ENCODE measurements at regions of chr6 and their contacts with region 1.

Region 1: GRCh38 chr6:75759207-75759606 is 10.2 kb downstream of the MYO6 start:
- DNase-seq: no peak
- ATAC-seq: peak; percentile 65
- H3K4me3 ChIP-seq: no peak overlapping the region
- H3K27ac ChIP-seq: no peak overlapping the region
- H3K4me1 ChIP-seq: no peaks in the 10 kb centered on the region
- H3K27me3 ChIP-seq: no peaks in the 10 kb centered on the region
- CTCF ChIP-seq: no peak
- EP300 ChIP-seq: no peak
- POLR2A ChIP-seq: no peak
- RAD21 ChIP-seq: no peak

Region 2: DNA sequence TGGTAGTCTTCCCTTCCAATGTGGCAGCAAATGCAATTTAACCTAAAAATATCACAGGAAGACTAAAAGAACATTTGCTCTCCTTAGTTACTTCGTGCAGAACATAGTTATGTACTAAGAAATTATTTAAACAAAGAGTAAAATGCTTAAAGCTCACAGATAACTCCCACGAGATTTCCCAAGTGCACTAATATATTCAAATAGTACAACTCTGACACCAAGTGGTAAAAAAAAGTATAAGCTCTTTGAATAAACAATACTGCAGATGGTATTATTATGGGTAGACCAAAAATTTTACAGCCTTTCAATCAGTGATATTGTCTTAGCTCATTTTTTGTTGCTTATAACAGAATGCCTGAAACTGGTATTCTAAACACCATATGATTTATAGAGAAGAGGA is 212.8 kb before region 1 on chr6:
- CTCF ChIA-PET with region 1: no interaction called
- POLR2A ChIA-PET with region 1: no interaction called
- RAD21 ChIA-PET with region 1: no interaction called
- SMC1A ChIA-PET with region 1: no interaction called
- in situ Hi-C with region 1: no loop called
- intact Hi-C with region 1: no loop called
- DNase-seq: no peak
- ATAC-seq: peak; percentile 57
- H3K4me3 ChIP-seq: no peak overlapping the region
- H3K27ac ChIP-seq: no peak overlapping the region
- H3K4me1 ChIP-seq: peaks cover 2% of the 10 kb centered on the region; the same call in 1 of the 2 replicates
- H3K27me3 ChIP-seq: no peaks in the 10 kb centered on the region
- CTCF ChIP-seq: no peak; a peak in 1 of 6 replicates
- EP300 ChIP-seq: no peak
- POLR2A ChIP-seq: no peak
- RAD21 ChIP-seq: no peak

Region 3: GRCh38 chr6:75568100-75568499 is 191.1 kb before region 1 on chr6:
- CTCF ChIA-PET with region 1: no interaction called
- POLR2A ChIA-PET with region 1: no interaction called
- RAD21 ChIA-PET with region 1: no interaction called
- SMC1A ChIA-PET with region 1: no interaction called
- in situ Hi-C with region 1: no loop called
- intact Hi-C with region 1: no loop called
- DNase-seq: no peak
- ATAC-seq: no peak
- H3K4me3 ChIP-seq: no peak overlapping the region
- H3K27ac ChIP-seq: no peak overlapping the region
- H3K4me1 ChIP-seq: no peaks in the 10 kb centered on the region
- H3K27me3 ChIP-seq: no peaks in the 10 kb centered on the region
- CTCF ChIP-seq: no peak
- EP300 ChIP-seq: no peak
- POLR2A ChIP-seq: no peak
- RAD21 ChIP-seq: no peak

Region 4: GRCh38 chr6:75735491-75736186 is 23.6 kb before region 1 on chr6:
- CTCF ChIA-PET with region 1: no interaction called
- POLR2A ChIA-PET with region 1: interaction called, 10 read pairs
- RAD21 ChIA-PET with region 1: no interaction called
- SMC1A ChIA-PET with region 1: interaction called, 4 read pairs
- in situ Hi-C with region 1: no loop called
- intact Hi-C with region 1: no loop called
- DNase-seq: peak; percentile 33
- ATAC-seq: peak; percentile 95
- H3K4me3 ChIP-seq: no peak overlapping the region
- H3K27ac ChIP-seq: no peak overlapping the region; the same call in 1 of the 2 replicates
- H3K4me1 ChIP-seq: no peaks in the 10 kb centered on the region
- H3K27me3 ChIP-seq: no peaks in the 10 kb centered on the region
- CTCF ChIP-seq: no peak
- EP300 ChIP-seq: peak in 1 of 2 experiments; percentile 6; a peak in 1 of 4 replicates
- POLR2A ChIP-seq: no peak
- RAD21 ChIP-seq: no peak

Region 5: GRCh38 chr6:75778757-75779156 is 19.6 kb after region 1 on chr6:
- CTCF ChIA-PET with region 1: interaction called, 3 read pairs
- POLR2A ChIA-PET with region 1: interaction called, 3 read pairs
- RAD21 ChIA-PET with region 1: no interaction called
- SMC1A ChIA-PET with region 1: interaction called, 12 read pairs
- in situ Hi-C with region 1: no loop called
- intact Hi-C with region 1: no loop called
- DNase-seq: no peak
- ATAC-seq: no peak
- H3K4me3 ChIP-seq: no peak overlapping the region
- H3K27ac ChIP-seq: no peak overlapping the region
- H3K4me1 ChIP-seq: no peaks in the 10 kb centered on the region
- H3K27me3 ChIP-seq: no peaks in the 10 kb centered on the region
- CTCF ChIP-seq: no peak
- EP300 ChIP-seq: no peak
- POLR2A ChIP-seq: no peak
- RAD21 ChIP-seq: no peak

Region 6: GRCh38 chr6:75842191-75842590 is 83.0 kb after region 1 on chr6:
- CTCF ChIA-PET with region 1: no interaction called
- POLR2A ChIA-PET with region 1: no interaction called
- RAD21 ChIA-PET with region 1: no interaction called
- SMC1A ChIA-PET with region 1: no interaction called
- in situ Hi-C with region 1: no loop called
- intact Hi-C with region 1: no loop called
- DNase-seq: no peak
- ATAC-seq: no peak
- H3K4me3 ChIP-seq: no peak overlapping the region
- H3K27ac ChIP-seq: no peak overlapping the region
- H3K4me1 ChIP-seq: no peaks in the 10 kb centered on the region
- H3K27me3 ChIP-seq: no peaks in the 10 kb centered on the region
- CTCF ChIP-seq: no peak
- EP300 ChIP-seq: no peak
- POLR2A ChIP-seq: no peak
- RAD21 ChIP-seq: no peak

Region 7: GRCh38 chr6:76004202-76004601 is 245.0 kb after region 1 on chr6:
- CTCF ChIA-PET with region 1: no interaction called
- POLR2A ChIA-PET with region 1: no interaction called
- RAD21 ChIA-PET with region 1: no interaction called
- SMC1A ChIA-PET with region 1: no interaction called
- in situ Hi-C with region 1: no loop called
- intact Hi-C with region 1: no loop called
- DNase-seq: peak; percentile 16
- ATAC-seq: peak; percentile 82
- H3K4me3 ChIP-seq: no peak overlapping the region
- H3K27ac ChIP-seq: no peak overlapping the region
- H3K4me1 ChIP-seq: no peaks in the 10 kb centered on the region
- H3K27me3 ChIP-seq: no peaks in the 10 kb centered on the region
- CTCF ChIP-seq: no peak
- EP300 ChIP-seq: no peak; a peak in 1 of 4 replicates
- POLR2A ChIP-seq: no peak
- RAD21 ChIP-seq: no peak